ENCODE measurements at regions of chr1 and their contacts with region 1.

Region 1: GRCh38 chr1:232457595-232457994 is 172.3 kb downstream of the SIPA1L2 start:
- DNase-seq: no peak
- H3K4me3 ChIP-seq: no peak overlapping the region
- H3K27ac ChIP-seq: no peak overlapping the region
- H3K4me1 ChIP-seq: no peaks in the 10 kb centered on the region
- H3K27me3 ChIP-seq: no peaks in the 10 kb centered on the region
- CTCF ChIP-seq: no peak
- EP300 ChIP-seq: no peak
- POLR2A ChIP-seq: no peak

Region 2: GRCh38 chr1:231929311-231929710 is 528.3 kb before region 1 on chr1:
- intact Hi-C with region 1: no loop called
- DNase-seq: no peak
- H3K4me3 ChIP-seq: no peak overlapping the region
- H3K27ac ChIP-seq: no peak overlapping the region
- H3K4me1 ChIP-seq: peaks cover 19% of the 10 kb centered on the region
- H3K27me3 ChIP-seq: no peaks in the 10 kb centered on the region
- CTCF ChIP-seq: no peak
- EP300 ChIP-seq: no peak
- POLR2A ChIP-seq: no peak

Region 3: GRCh38 chr1:232305050-232305449 is 152.5 kb before region 1 on chr1:
- intact Hi-C with region 1: no loop called
- DNase-seq: no peak
- H3K4me3 ChIP-seq: no peak overlapping the region
- H3K27ac ChIP-seq: no peak overlapping the region
- H3K4me1 ChIP-seq: peaks cover 2% of the 10 kb centered on the region
- H3K27me3 ChIP-seq: no peaks in the 10 kb centered on the region
- CTCF ChIP-seq: no peak
- EP300 ChIP-seq: no peak
- POLR2A ChIP-seq: no peak

Region 4: GRCh38 chr1:232501854-232502253 is 44.3 kb after region 1 on chr1:
- intact Hi-C with region 1: loop called in 1 of 4 experiments (anchors 1 kb)
- DNase-seq: no peak
- H3K4me3 ChIP-seq: no peak overlapping the region
- H3K27ac ChIP-seq: no peak overlapping the region
- H3K4me1 ChIP-seq: peaks cover 11% of the 10 kb centered on the region
- H3K27me3 ChIP-seq: no peaks in the 10 kb centered on the region
- CTCF ChIP-seq: no peak
- EP300 ChIP-seq: no peak
- POLR2A ChIP-seq: no peak

Region 5: DNA sequence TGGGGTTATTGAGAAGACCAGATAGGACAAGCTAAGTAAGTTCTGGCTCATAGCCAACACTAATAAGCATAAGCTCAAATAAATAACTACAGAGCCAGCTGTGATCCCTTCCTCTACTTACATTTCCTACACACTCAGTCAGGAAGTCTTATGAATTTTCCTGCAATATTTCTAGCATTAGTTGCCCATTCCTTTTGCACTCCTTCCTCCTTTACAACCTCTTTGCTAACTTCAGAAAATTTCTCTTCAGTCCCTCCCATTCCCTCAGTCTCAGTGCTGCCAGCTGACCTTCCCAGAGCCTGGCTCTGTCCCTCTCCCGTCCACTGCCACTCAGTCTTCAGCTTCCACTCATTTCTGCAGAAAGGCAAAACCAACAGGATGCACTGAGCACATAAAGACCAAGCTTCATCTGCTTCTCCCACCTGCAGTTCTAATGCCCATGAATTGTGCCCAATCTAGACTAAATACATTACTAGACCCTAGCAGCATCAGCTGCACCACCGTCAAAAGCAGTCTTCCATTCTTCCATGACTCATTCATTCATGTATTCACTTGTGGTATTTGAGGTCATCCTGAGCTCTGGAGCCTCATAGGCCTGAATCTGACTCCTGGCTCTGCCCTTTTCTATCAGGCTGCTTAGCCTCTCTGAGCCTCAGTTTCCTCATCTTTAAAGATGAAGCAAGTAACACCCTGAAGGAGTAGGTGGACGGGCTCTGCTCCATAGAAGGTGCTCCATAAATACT is 226.9 kb after region 1 on chr1:
- intact Hi-C with region 1: no loop called
- DNase-seq: no peak
- H3K4me3 ChIP-seq: no peak overlapping the region
- H3K27ac ChIP-seq: no peak overlapping the region
- H3K4me1 ChIP-seq: no peaks in the 10 kb centered on the region
- H3K27me3 ChIP-seq: no peaks in the 10 kb centered on the region
- CTCF ChIP-seq: no peak
- EP300 ChIP-seq: no peak
- POLR2A ChIP-seq: no peak

Region 6: GRCh38 chr1:232880354-232880753 is 422.8 kb after region 1 on chr1:
- intact Hi-C with region 1: no loop called
- DNase-seq: no peak
- H3K4me3 ChIP-seq: no peak overlapping the region
- H3K27ac ChIP-seq: no peak overlapping the region
- H3K4me1 ChIP-seq: no peaks in the 10 kb centered on the region
- H3K27me3 ChIP-seq: no peaks in the 10 kb centered on the region
- CTCF ChIP-seq: no peak
- EP300 ChIP-seq: no peak
- POLR2A ChIP-seq: no peak

Measured in ovary (tissue), 10 donors.